ENCODE measurements at regions of chr15 and their contacts with region 1.

Region 1: GRCh38 chr15:60916679-60917460 is 312.2 kb downstream of the RORA start:
- DNase-seq: peak; percentile 74
- CTCF ChIP-seq: peak; percentile 76

Region 2: GRCh38 chr15:60362321-60363086 is 554.4 kb before region 1 on chr15:
- CTCF ChIA-PET with region 1: interaction called, 16 read pairs
- POLR2A ChIA-PET with region 1: no interaction called
- DNase-seq: no peak
- CTCF ChIP-seq: no peak

Region 3: GRCh38 chr15:60585743-60586708 is 330.8 kb before region 1 on chr15:
- CTCF ChIA-PET with region 1: interaction called, 103 read pairs
- POLR2A ChIA-PET with region 1: no interaction called
- DNase-seq: peak; percentile 44
- CTCF ChIP-seq: peak; percentile 78

Region 4: GRCh38 chr15:60720493-60721256 is 196.2 kb before region 1 on chr15:
- CTCF ChIA-PET with region 1: interaction called, 13 read pairs
- POLR2A ChIA-PET with region 1: no interaction called
- DNase-seq: peak; percentile 25
- CTCF ChIP-seq: no peak

Region 5: DNA sequence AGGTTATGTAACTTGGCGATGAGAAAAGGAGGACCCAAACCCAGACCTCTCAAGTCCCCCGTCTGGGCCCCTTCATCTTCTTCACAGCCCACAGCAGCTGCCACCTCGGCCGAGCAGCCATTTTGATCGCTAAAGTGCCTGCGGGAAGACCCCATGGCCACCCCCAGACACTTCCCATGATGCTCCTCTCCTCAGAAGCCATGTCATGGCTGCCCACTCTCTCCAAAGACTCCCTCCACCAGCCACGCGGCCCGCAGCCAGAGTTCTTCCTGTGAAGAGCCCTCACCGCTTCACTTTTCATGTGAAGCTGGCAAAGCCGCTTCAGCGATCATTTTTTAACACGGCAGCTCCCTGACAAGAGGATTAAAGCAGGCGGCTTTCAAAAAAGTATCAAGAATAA is 23.0 kb before region 1 on chr15:
- CTCF ChIA-PET with region 1: interaction called, 53 read pairs
- POLR2A ChIA-PET with region 1: no interaction called
- DNase-seq: no peak
- CTCF ChIP-seq: no peak

Region 6: GRCh38 chr15:60905587-60905986 is 11.3 kb before region 1 on chr15:
- CTCF ChIA-PET with region 1: interaction called, 53 read pairs
- POLR2A ChIA-PET with region 1: no interaction called
- DNase-seq: no peak
- CTCF ChIP-seq: no peak